ENCODE measurements at regions of chr20 and their contacts with region 1.

Region 1: GRCh38 chr20:49846206-49846807 is 33.7 kb downstream of the SLC9A8 start:
- DNase-seq: peak in 8 of 9 donors; percentile 34 to 70 (median 60)
- ATAC-seq: peak; percentile 90
- H3K4me3 ChIP-seq: no peak overlapping the region
- H3K4me3 Mint-ChIP-seq: no peak overlapping the region
- H3K27ac ChIP-seq: no peak overlapping the region
- H3K27ac Mint-ChIP-seq: no peak overlapping the region
- H3K4me1 ChIP-seq: no peaks in the 10 kb centered on the region
- H3K4me1 Mint-ChIP-seq: peaks cover 9 to 25% (median 13%) of the 10 kb centered on the region in 7 donors
- H3K27me3 ChIP-seq: no peaks in the 10 kb centered on the region
- H3K27me3 Mint-ChIP-seq: no peaks in the 10 kb centered on the region

Region 2: GRCh38 chr20:49330544-49331239 is 515.6 kb before region 1 on chr20:
- CTCF ChIA-PET with region 1: no interaction called
- POLR2A ChIA-PET with region 1: no interaction called
- intact Hi-C with region 1: loop called in 1 of 2 experiments (anchors 5 kb)
- DNase-seq: no peak
- ATAC-seq: no peak
- H3K4me3 ChIP-seq: no peak overlapping the region
- H3K4me3 Mint-ChIP-seq: no peak overlapping the region
- H3K27ac ChIP-seq: no peak overlapping the region
- H3K27ac Mint-ChIP-seq: no peak overlapping the region
- H3K4me1 ChIP-seq: no peaks in the 10 kb centered on the region
- H3K4me1 Mint-ChIP-seq: peaks cover 0 to 6% (median 0%) of the 10 kb centered on the region in 7 donors
- H3K27me3 ChIP-seq: peaks cover 0 to 5% of the 10 kb centered on the region in 2 donors
- H3K27me3 Mint-ChIP-seq: peaks cover 17 to 53% (median 29%) of the 10 kb centered on the region in 5 donors

Region 3: DNA sequence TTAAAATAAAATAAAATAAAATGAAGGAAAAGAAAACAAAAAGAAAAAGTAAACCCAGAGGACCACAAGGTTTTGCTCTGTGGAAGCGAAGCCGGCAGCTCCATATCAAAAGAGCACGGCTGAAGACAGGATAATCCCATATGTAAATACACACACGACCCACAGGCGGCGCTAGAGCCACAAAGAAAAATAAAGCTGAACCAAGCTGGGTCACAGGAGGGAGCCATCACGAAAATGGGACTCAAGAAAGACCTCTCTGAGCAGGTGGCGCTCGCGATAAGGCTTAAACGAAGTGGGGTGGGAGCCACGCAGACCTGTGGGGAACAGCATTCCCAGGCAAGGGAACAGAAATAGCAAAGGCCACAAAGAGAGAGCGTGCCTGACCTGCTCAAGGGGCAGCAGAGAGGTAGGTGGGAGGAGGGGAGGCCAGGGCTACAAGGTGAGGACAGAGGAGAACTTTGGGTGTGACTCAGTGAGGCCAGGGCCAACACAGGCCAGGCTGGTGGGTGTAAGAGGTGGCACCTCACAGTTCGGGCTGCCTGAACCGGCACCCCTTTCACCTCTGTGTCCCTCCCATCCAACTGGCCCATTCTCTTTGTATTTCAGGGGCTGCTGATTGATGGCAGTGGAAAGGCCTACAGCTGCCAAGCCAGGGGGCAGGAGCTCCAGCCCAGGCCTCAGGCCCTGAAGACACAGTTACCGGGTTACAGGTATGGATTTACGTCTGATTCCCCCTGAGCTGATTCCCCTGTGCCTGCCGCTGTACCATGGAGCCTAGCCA is 304.4 kb before region 1 on chr20:
- CTCF ChIA-PET with region 1: interaction called, 3 read pairs
- POLR2A ChIA-PET with region 1: no interaction called
- intact Hi-C with region 1: loop called in 1 of 2 experiments (anchors 2 kb)
- DNase-seq: peak in 8 of 9 donors; percentile 1 to 66 (median 16)
- ATAC-seq: peak; percentile 72
- H3K4me3 ChIP-seq: no peak overlapping the region
- H3K4me3 Mint-ChIP-seq: peak overlapping the region in 1 of 10 donors; percentile 53
- H3K27ac ChIP-seq: no peak overlapping the region
- H3K27ac Mint-ChIP-seq: peak overlapping the region in 1 of 9 donors; percentile 82
- H3K4me1 ChIP-seq: no peaks in the 10 kb centered on the region
- H3K4me1 Mint-ChIP-seq: peaks cover 0 to 32% (median 0%) of the 10 kb centered on the region in 7 donors
- H3K27me3 ChIP-seq: no peaks in the 10 kb centered on the region
- H3K27me3 Mint-ChIP-seq: peaks cover 2 to 15% (median 8%) of the 10 kb centered on the region in 5 donors

Region 4: GRCh38 chr20:50292324-50293243 is 446.3 kb after region 1 on chr20:
- CTCF ChIA-PET with region 1: no interaction called
- POLR2A ChIA-PET with region 1: no interaction called
- intact Hi-C with region 1: no loop called
- DNase-seq: no peak
- ATAC-seq: peak; percentile 75
- H3K4me3 ChIP-seq: no peak overlapping the region
- H3K4me3 Mint-ChIP-seq: no peak overlapping the region
- H3K27ac ChIP-seq: no peak overlapping the region
- H3K27ac Mint-ChIP-seq: no peak overlapping the region
- H3K4me1 ChIP-seq: no peaks in the 10 kb centered on the region
- H3K4me1 Mint-ChIP-seq: peaks cover 0 to 24% (median 2%) of the 10 kb centered on the region in 7 donors
- H3K27me3 ChIP-seq: no peaks in the 10 kb centered on the region
- H3K27me3 Mint-ChIP-seq: peaks cover 0 to 16% (median 4%) of the 10 kb centered on the region in 5 donors